AG04449 (cell line): ENCODE measurements at regions of chr10 and their contacts with region 1.

Region 1: DNA sequence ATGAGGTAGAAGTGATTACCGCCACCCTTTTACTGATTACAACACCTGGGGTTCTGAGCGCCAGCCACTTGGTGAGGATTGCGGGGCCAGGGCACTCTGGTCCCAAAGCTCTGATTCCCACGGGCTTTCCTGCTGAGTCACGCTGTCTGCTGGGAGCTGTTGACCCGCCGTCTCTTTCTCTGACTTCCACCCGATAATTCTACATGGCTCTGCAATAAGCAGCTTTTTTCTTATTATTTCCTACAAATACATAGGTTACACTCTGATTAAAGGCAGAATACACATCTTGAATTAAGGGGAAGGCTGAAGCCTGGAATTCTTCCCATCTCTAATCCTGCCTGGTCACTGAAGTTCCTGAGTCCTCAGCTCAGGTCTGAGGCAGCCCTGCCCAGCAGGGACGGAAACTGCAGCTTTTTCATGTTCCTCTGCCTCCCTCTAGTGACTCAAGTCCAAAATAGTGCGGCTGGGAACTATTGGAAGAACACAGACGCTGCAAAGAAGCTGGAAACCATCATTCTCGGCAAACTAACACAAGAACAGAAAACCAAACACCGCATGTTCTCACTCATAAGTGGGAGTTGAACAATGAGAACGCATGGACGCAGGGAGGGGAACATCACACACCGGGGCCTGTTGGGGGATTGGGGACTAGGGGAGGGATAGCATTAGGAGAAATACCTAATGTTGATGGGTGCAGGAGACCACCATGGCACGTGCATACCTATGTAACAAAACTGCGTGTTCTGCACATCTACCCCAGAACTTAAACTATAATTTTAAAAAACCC is 178.3 kb downstream of the PRKCQ start:
- DNase-seq: peak; percentile 70
- H3K4me3 ChIP-seq: peak overlapping the region; percentile 39
- CTCF ChIP-seq: peak; percentile 80

Region 2: DNA sequence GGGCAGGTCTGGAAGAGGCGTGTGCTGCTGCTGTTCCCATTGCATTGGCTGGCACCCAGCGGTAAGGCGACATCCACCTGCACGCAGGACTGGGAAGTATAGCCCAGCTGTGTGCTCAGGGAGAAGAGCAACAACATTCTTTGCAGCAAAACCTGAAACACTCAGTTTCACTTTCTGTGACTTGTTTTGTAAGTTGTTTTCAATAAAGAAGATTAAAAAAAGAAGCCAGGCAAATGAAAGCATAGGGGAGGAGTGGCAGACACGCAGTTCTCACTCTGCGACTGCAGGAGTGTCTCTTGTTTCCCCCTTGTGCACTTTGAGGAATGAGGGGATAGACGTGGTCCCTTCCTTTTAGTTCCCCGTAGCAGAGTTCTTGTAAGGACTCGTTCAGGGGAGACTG is 506.0 kb before region 1 on chr10:
- CTCF ChIA-PET with region 1: no interaction called
- POLR2A ChIA-PET with region 1: no interaction called
- DNase-seq: no peak
- H3K4me3 ChIP-seq: no peak overlapping the region
- CTCF ChIP-seq: no peak

Region 3: GRCh38 chr10:6014241-6014761 is 387.5 kb before region 1 on chr10:
- CTCF ChIA-PET with region 1: interaction called, 53 read pairs
- POLR2A ChIA-PET with region 1: no interaction called
- DNase-seq: no peak
- H3K4me3 ChIP-seq: no peak overlapping the region
- CTCF ChIP-seq: peak; percentile 56

Region 4: DNA sequence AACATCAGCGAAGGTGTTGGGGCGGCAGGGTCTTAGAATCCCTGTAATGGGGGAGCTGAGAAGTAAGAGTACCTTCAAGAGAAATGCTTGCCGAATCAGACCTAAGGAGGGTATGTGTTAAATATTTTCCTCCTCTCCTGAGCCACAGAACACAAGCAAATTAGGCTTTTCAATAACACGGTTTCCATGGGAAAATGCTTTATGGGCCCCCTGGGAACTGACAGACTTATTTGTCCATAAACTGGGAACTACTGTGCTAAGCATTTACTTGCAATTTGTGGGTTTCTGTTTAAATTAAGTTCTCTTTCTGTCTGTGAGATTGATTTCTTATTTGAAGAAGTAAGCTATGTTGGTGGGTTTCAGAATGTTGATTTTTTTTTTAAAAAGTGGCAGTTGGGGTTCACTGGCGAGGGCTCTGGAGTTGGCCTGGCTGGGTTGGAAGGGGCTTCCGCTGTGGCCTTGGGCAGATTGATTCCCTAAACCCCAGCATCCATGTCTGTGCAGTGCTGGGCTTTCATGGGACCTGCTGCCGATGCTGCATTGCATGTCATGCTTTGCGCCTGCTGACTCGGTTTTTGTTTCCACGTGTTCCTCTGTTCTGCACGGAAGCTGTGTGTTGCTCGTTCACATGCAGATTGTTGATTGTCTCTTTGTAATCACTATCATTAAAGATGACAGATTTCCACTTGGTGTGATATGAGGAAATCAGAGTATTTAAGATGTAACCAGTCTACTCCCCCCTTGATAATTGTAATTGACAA is 305.8 kb before region 1 on chr10:
- CTCF ChIA-PET with region 1: interaction called, 155 read pairs
- POLR2A ChIA-PET with region 1: no interaction called
- DNase-seq: no peak
- H3K4me3 ChIP-seq: no peak overlapping the region
- CTCF ChIP-seq: no peak

Region 5: DNA sequence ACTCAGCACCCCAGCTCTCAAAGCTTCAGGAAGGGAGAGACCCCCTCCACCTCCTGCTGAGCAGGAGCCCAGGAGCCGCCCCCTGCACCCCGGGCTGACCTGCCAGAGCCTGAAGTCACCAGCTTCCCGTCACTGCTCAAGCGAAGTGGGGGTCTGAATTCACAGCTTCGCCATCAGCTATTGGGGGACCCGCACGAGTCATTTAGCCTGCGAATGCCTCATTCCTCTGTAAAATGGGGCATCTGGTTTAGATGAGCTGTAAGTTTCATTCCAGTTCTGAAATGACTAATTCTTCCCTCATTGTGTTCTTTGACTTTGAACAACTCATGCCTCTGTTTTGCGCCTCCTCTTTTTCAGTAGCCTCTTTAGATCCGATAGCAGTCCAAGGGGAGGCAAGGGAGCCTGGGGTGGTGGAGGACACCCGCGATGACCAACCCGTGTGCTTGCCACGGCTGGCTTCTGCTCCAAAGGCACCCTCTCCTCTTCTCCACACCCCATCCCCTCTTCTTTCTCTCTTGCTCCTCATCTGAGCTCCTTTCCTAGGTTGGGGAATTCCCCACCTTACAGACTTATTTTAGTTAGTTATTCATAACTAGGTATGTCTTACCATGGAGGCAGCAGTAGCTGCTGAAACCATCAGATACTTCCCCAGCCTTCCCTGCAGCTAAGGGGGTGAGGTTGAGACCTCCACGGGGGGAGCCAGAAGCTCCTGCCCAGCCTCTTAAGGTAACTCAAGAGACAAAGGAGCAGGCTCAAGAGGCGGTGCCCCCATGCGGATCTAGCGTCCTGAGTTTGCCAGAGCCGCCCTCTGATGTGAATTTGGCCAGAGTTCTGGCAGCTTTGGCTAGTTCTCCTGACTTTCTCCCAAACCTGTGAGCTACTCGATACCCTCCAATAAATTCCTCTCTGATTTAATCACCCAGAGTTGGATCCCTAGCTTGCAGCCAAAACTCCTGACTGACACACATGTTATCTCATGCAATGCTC is 265.2 kb before region 1 on chr10:
- CTCF ChIA-PET with region 1: interaction called, 27 read pairs
- POLR2A ChIA-PET with region 1: interaction called, 6 read pairs
- DNase-seq: no peak
- H3K4me3 ChIP-seq: peak overlapping the region; percentile 23
- CTCF ChIP-seq: no peak

Region 6: GRCh38 chr10:6171881-6172695 is 229.7 kb before region 1 on chr10:
- CTCF ChIA-PET with region 1: interaction called, 11 read pairs
- POLR2A ChIA-PET with region 1: interaction called, 4 read pairs
- DNase-seq: peak; percentile 63
- H3K4me3 ChIP-seq: peak overlapping the region; percentile 6; the same call in 1 of the 2 replicates
- CTCF ChIP-seq: no peak

Region 7: DNA sequence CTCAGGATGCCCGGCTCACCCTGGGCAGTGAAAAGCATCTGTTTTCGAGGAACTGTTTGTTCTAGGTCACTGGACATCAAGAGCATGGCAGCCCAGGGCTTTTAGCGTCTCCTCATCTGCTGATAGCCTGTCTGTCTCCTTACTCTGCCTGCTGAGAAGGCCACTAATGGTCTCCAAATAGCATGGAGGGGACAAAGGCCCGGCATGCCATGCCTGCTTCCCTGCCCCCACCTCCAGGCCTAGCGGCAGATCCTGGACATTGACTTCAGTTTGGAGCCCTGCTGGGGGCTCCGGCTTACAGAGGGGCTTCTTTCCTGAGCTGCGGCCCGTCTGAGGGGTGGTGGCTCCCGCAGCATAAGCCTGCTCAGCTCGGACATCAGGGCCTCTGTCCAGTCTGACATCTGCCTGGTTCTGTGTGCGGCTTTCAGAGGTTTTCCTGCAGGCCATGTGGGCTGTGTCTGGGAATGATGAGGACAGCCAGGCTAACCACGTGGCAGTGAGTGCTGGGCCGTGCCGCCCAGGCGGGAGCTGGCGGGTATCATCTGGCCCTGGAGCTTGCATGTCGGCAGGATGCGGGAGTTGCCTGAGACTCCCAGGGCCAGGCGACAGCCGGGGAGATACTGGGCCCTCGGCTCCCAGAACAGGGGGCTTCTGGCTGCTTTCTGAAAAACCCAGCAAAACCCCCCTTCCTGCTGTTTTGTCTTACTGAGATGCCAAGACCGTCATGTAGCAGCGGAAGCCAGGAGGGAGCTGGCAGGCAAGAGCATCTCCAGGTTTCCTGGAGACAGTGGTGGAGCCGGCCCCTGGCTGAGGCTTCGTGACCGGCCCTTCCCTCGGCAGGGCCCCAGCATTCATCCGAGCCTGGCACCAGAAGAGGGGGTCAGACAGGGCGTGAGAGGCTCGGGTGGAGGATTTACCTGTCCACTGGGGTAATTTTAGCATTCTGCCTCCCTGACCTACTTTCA is 189.8 kb before region 1 on chr10:
- CTCF ChIA-PET with region 1: interaction called, 16 read pairs
- POLR2A ChIA-PET with region 1: no interaction called
- DNase-seq: no peak
- H3K4me3 ChIP-seq: no peak overlapping the region
- CTCF ChIP-seq: no peak

Region 8: DNA sequence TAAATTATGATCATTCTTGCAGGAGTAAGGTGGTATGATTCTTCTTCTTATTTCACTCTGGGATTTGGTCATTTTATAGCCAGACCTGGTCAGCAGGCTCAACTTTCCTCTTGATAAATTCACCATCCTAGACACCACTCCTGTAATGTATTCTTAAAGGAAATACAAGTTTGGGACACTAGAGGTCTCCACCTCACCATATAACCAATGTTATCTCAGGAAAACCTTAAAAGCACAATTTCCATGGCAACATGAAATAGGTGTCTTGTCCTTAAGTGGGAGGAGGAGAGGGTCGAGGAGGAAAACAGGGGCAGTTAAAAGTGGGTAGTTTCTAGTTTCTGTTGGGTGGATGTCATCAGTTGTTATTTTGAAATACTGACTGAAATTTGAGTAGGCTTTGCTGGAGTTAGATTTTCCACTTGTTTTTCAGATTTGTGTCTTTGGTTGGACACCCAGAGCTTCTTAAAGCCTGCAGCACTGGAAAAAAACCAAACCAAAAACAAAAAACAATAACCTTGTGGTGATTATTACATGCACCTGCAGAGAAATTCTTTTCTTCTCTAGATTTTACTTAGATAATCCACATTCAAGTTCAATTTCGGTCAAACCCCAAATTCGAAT is 15.2 kb after region 1 on chr10:
- CTCF ChIA-PET with region 1: interaction called, 25 read pairs
- POLR2A ChIA-PET with region 1: no interaction called
- DNase-seq: no peak
- H3K4me3 ChIP-seq: no peak overlapping the region
- CTCF ChIP-seq: peak; percentile 37